H1 (cell line): ENCODE measurements at regions of chr7 and their contacts with region 1.

Region 1: GRCh38 chr7:43439631-43440401 is 143.1 kb upstream of the STK17A start:
- DNase-seq: peak; percentile 77 to 85
- H3K4me3 ChIP-seq: no peak overlapping the region
- H3K27ac ChIP-seq: no peak overlapping the region
- H3K4me1 ChIP-seq: peaks cover 0 to 3% (median 1%) of the 10 kb centered on the region in 4 experiments; a peak in 2 of 7 replicates
- H3K27me3 ChIP-seq: no peaks in the 10 kb centered on the region
- CTCF ChIP-seq: peak; percentile 91 to 95 (median 91)
- EP300 ChIP-seq: no peak
- POLR2A ChIP-seq: no peak
- RAD21 ChIP-seq: peak; percentile 85 to 90

Region 2: GRCh38 chr7:42940985-42941847 is 498.6 kb before region 1 on chr7:
- CTCF ChIA-PET with region 1: interaction called, 14 read pairs
- POLR2A ChIA-PET with region 1: no interaction called
- DNase-seq: peak; percentile 65 to 92
- H3K4me3 ChIP-seq: no peak overlapping the region
- H3K27ac ChIP-seq: no peak overlapping the region
- H3K4me1 ChIP-seq: no peaks in the 10 kb centered on the region; a peak in 1 of 7 replicates
- H3K27me3 ChIP-seq: no peaks in the 10 kb centered on the region
- CTCF ChIP-seq: peak; percentile 2 to 91 (median 82)
- EP300 ChIP-seq: no peak
- POLR2A ChIP-seq: 0 out of 3 replicates have a peak, but pooled peaks of 1 of the 2 experiments have one; percentile 25
- RAD21 ChIP-seq: peak; percentile 96

Region 3: GRCh38 chr7:43385856-43386255 is 54.0 kb before region 1 on chr7:
- CTCF ChIA-PET with region 1: interaction called, 11 read pairs
- POLR2A ChIA-PET with region 1: no interaction called
- DNase-seq: no peak
- H3K4me3 ChIP-seq: no peak overlapping the region
- H3K27ac ChIP-seq: no peak overlapping the region
- H3K4me1 ChIP-seq: no peaks in the 10 kb centered on the region
- H3K27me3 ChIP-seq: no peaks in the 10 kb centered on the region
- CTCF ChIP-seq: no peak
- EP300 ChIP-seq: no peak
- POLR2A ChIP-seq: no peak
- RAD21 ChIP-seq: no peak

Region 4: GRCh38 chr7:43391518-43391917 is 48.3 kb before region 1 on chr7:
- CTCF ChIA-PET with region 1: interaction called, 11 read pairs
- POLR2A ChIA-PET with region 1: no interaction called
- DNase-seq: peak in 1 of 2 experiments; percentile 38
- H3K4me3 ChIP-seq: no peak overlapping the region
- H3K27ac ChIP-seq: no peak overlapping the region
- H3K4me1 ChIP-seq: peaks cover 0 to 7% (median 6%) of the 10 kb centered on the region in 4 experiments; a peak in 4 of 7 replicates
- H3K27me3 ChIP-seq: no peaks in the 10 kb centered on the region
- CTCF ChIP-seq: peak in 2 of 3 experiments; percentile 26 to 48; a peak in 1 of 4 replicates
- EP300 ChIP-seq: no peak
- POLR2A ChIP-seq: no peak
- RAD21 ChIP-seq: peak; percentile 39 to 57; a peak in 3 of 4 replicates

Region 5: DNA sequence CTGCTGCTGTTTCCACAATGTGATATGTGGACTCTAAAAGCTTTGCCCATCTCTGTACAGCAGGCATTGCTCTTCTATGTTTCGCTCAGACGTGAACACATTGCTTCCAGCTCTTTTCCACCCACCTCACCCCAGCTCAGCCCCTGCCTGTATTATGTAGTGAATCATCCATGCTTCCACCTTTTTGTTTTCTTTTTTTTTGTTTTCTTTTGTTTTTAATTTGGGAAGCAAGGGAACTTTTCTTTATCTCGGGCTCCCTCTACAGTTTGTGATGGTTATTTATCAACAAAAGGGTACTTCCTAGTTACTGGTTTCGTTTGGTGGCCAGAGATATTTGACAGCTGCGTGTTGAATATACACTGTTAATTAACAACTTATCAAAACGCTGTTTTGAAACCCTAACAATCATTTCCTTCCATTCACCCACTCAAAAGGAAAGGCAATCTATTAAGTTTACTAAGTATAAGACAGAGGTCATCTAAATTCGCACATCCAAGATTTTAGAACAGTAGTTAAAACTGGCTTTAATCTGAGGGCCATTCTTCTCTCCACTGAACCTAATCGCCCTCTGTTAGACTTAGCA is 15.2 kb after region 1 on chr7:
- CTCF ChIA-PET with region 1: interaction called, 20 read pairs
- POLR2A ChIA-PET with region 1: no interaction called
- DNase-seq: no peak
- H3K4me3 ChIP-seq: no peak overlapping the region
- H3K27ac ChIP-seq: no peak overlapping the region
- H3K4me1 ChIP-seq: peaks cover 0 to 3% (median 2%) of the 10 kb centered on the region in 4 experiments; a peak in 4 of 7 replicates
- H3K27me3 ChIP-seq: no peaks in the 10 kb centered on the region
- CTCF ChIP-seq: peak in 2 of 3 experiments; percentile 37 to 46; a peak in 2 of 4 replicates
- EP300 ChIP-seq: no peak
- POLR2A ChIP-seq: no peak
- RAD21 ChIP-seq: peak; percentile 68 to 71

Region 6: GRCh38 chr7:43582503-43583423 is 142.9 kb after region 1 on chr7 and contains the start of gene STK17A:
- CTCF ChIA-PET with region 1: no interaction called
- POLR2A ChIA-PET with region 1: no interaction called
- DNase-seq: peak; percentile 87 to 94
- H3K4me3 ChIP-seq: peak within 1 kb of the TSS; percentile 77 to 90 (median 84)
- H3K27ac ChIP-seq: no peak within 1 kb of the TSS
- H3K4me1 ChIP-seq: peaks cover 0 to 12% (median 5%) of the 10 kb centered on the region in 4 experiments; a peak in 6 of 7 replicates
- H3K27me3 ChIP-seq: no peaks in the 10 kb centered on the region; a peak in 3 of 7 replicates
- CTCF ChIP-seq: peak; percentile 99
- EP300 ChIP-seq: 0 out of 3 replicates have a peak, but pooled peaks of 1 of the 2 experiments have one; percentile 45
- POLR2A ChIP-seq: peak in 1 of 2 experiments; percentile 85; a peak in 2 of 3 replicates
- RAD21 ChIP-seq: peak; percentile 94 to 95
- total RNA-seq, gene STK17A: 12.2 and 13.4 TPM in 2 replicates